Cardiac septum (tissue), 1 donor: ENCODE measurements at regions of chr4 and their contacts with region 1.

Region 1: DNA sequence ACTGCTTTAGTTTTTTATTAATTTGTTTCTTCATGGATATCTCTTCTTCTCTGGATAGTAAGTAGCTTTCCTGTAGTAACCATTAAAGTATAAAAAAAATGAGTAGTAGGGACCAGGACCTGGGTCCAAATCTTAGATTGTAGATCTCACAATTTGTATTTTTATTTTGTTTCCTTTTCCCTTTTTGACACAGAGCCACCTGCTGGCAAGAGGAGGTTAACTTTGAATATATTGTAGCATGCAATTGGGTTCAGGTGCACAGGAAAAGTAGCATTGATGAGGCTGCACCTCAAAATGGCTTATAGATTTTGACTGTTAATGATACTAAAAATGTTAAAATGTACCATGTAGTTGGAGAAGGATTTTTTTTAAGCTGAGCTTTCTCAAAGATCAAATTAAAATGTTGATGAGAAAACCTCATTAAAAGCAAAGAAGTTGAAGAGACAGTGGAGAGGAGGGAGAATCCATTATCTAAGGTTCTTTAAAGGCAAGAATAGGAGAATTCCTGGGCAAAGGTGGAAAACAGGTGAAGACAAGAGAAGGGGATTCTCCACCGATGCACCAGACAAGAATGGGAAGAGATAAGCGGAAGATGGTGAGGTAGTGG is 48.3 kb upstream of the HPGDS start:
- DNase-seq: no peak

Region 2: GRCh38 chr4:94332983-94333590 is 57.8 kb before region 1 on chr4:
- intact Hi-C with region 1: loop called (anchors 10 kb)
- DNase-seq: no peak